ENCODE measurements at regions of chr17 and their contacts with region 1.

Region 1: GRCh38 chr17:65231662-65232335 is 94.6 kb downstream of the RGS9 start:
- DNase-seq: peak; percentile 73
- ATAC-seq: peak; percentile 95
- H3K4me3 Mint-ChIP-seq: no peak overlapping the region
- H3K27ac Mint-ChIP-seq: no peak overlapping the region
- H3K4me1 Mint-ChIP-seq: peaks cover 11% of the 10 kb centered on the region
- H3K27me3 Mint-ChIP-seq: peaks cover 1% of the 10 kb centered on the region; the same call in 1 of the 2 replicates
- CTCF ChIP-seq: peak; percentile 60

Region 2: DNA sequence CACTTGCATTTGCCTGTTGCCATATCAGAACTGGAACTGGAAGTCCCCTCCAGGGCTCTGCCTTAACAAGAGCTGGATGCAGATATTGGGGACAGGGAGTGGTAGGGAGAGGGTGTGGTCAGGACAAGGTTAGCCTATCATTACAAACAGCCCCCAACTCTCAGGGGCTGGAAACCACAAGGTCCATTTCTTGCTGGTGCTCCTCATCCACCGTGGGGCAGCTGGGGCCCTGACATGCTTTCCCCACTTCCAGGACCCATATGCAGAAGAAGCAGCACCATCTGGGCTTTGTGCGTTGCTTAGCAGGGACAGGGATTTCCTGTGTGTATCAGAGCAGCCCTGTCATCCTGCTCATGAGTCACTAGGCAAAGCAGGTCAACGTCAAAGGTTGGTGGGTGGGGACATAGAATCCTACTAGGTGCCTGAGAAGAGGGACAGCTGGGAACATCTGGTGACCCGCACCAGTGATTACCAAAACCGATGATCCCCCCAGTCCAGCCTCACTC is 67.8 kb before region 1 on chr17:
- CTCF ChIA-PET with region 1: no interaction called
- POLR2A ChIA-PET with region 1: no interaction called
- DNase-seq: no peak
- ATAC-seq: no peak
- H3K4me3 Mint-ChIP-seq: no peak overlapping the region
- H3K27ac Mint-ChIP-seq: no peak overlapping the region
- H3K4me1 Mint-ChIP-seq: peaks cover 9% of the 10 kb centered on the region
- H3K27me3 Mint-ChIP-seq: no peaks in the 10 kb centered on the region; the same call in 1 of the 2 replicates
- CTCF ChIP-seq: no peak

Region 3: GRCh38 chr17:65219124-65219523 is 12.7 kb before region 1 on chr17:
- CTCF ChIA-PET with region 1: interaction called, 16 read pairs
- POLR2A ChIA-PET with region 1: no interaction called
- DNase-seq: no peak
- ATAC-seq: no peak; the same call in 1 of the 2 replicates
- H3K4me3 Mint-ChIP-seq: no peak overlapping the region
- H3K27ac Mint-ChIP-seq: no peak overlapping the region
- H3K4me1 Mint-ChIP-seq: no peaks in the 10 kb centered on the region
- H3K27me3 Mint-ChIP-seq: no peaks in the 10 kb centered on the region
- CTCF ChIP-seq: no peak

Region 4: GRCh38 chr17:65270499-65271253 is 38.9 kb after region 1 on chr17:
- CTCF ChIA-PET with region 1: interaction called, 10 read pairs
- POLR2A ChIA-PET with region 1: no interaction called
- DNase-seq: no peak
- ATAC-seq: no peak
- H3K4me3 Mint-ChIP-seq: no peak overlapping the region
- H3K27ac Mint-ChIP-seq: no peak overlapping the region
- H3K4me1 Mint-ChIP-seq: peaks cover 5% of the 10 kb centered on the region; the same call in 1 of the 2 replicates
- H3K27me3 Mint-ChIP-seq: no peaks in the 10 kb centered on the region
- CTCF ChIP-seq: no peak

Region 5: DNA sequence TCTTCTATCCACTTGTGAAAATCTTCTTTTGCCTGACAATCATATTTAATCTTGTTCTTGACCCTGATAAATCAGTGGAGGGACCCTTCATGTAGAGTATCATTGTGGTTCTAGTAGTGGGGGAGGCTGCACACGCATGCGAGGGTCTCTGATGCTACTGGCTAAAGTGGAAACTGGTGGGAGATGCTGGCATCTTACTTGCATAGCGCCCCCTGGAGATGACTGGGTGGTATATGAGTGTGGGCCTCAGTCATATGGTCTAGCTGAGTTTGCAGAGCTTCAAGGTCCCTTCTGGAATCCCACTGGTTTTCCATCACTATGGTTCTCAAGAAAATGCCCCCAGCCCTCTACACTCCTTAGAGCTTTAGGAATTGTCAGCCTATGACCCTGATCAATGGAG is 566.0 kb after region 1 on chr17:
- CTCF ChIA-PET with region 1: interaction called, 14 read pairs
- POLR2A ChIA-PET with region 1: no interaction called
- DNase-seq: peak; percentile 67
- ATAC-seq: peak; percentile 90
- H3K4me3 Mint-ChIP-seq: no peak overlapping the region
- H3K27ac Mint-ChIP-seq: no peak overlapping the region
- H3K4me1 Mint-ChIP-seq: no peaks in the 10 kb centered on the region
- H3K27me3 Mint-ChIP-seq: no peaks in the 10 kb centered on the region; the same call in 1 of the 2 replicates
- CTCF ChIP-seq: peak; percentile 74

Region 6: GRCh38 chr17:66165513-66166123 is 933.8 kb after region 1 on chr17:
- CTCF ChIA-PET with region 1: interaction called, 23 read pairs
- POLR2A ChIA-PET with region 1: no interaction called
- DNase-seq: no peak
- ATAC-seq: 0 out of 2 replicates have a peak, but pooled peaks have one; percentile 28
- H3K4me3 Mint-ChIP-seq: no peak overlapping the region
- H3K27ac Mint-ChIP-seq: no peak overlapping the region
- H3K4me1 Mint-ChIP-seq: no peaks in the 10 kb centered on the region
- H3K27me3 Mint-ChIP-seq: no peaks in the 10 kb centered on the region; the same call in 1 of the 2 replicates
- CTCF ChIP-seq: peak; percentile 55

Measured in WTC11 (cell line).